Caco-2 (cell line): ENCODE measurements at regions of chr9 and their contacts with region 1.

Region 1: DNA sequence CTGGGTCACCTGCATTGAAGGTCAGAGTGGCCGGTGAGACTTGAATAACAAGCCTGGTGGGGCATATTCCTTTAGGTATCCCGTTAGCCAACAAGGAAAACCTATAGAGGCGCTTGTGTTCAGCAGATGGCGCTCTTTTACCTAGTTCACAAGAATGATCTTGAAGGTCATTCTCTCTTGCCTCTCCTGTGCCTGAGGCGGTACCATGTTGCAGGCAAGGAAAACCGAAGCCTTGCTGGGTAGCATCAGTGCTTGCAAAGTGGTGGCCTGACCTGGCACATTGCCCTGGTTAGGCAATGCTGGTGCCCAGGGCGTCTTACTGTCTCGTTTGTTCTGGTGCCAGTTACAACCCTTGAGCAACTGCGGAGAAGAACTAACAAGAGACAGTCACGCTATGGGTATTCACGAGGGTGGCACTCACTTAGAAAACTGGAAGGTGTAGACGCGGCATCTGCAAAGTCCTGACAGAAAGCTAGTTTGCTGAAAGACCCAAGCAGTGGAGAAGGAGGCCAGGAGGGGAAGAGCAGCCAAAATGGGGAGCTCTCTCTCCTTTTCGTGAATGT is 56.7 kb downstream of the AOPEP start:
- DNase-seq: peak; percentile 79 to 82
- H3K4me3 ChIP-seq: no peak overlapping the region
- H3K4me3 Mint-ChIP-seq: no peak overlapping the region
- H3K27ac Mint-ChIP-seq: no peak overlapping the region
- H3K4me1 ChIP-seq: peaks cover 8% of the 10 kb centered on the region; the same call in 1 of the 2 replicates
- H3K4me1 Mint-ChIP-seq: peaks cover 12% of the 10 kb centered on the region
- H3K27me3 ChIP-seq: no peaks in the 10 kb centered on the region; the same call in 1 of the 2 replicates
- H3K27me3 Mint-ChIP-seq: no peaks in the 10 kb centered on the region
- CTCF ChIP-seq: peak; percentile 71 to 76

Region 2: GRCh38 chr9:94672811-94673487 is 110.2 kb before region 1 on chr9:
- CTCF ChIA-PET with region 1: no interaction called
- POLR2A ChIA-PET with region 1: no interaction called
- intact Hi-C with region 1: loop called (anchors 5 kb)
- DNase-seq: no peak
- H3K4me3 ChIP-seq: no peak overlapping the region
- H3K4me3 Mint-ChIP-seq: no peak overlapping the region
- H3K27ac Mint-ChIP-seq: peak overlapping the region; percentile 27
- H3K4me1 ChIP-seq: peaks cover 32% of the 10 kb centered on the region
- H3K4me1 Mint-ChIP-seq: peaks cover 21% of the 10 kb centered on the region
- H3K27me3 ChIP-seq: no peaks in the 10 kb centered on the region
- H3K27me3 Mint-ChIP-seq: no peaks in the 10 kb centered on the region
- CTCF ChIP-seq: no peak

Region 3: DNA sequence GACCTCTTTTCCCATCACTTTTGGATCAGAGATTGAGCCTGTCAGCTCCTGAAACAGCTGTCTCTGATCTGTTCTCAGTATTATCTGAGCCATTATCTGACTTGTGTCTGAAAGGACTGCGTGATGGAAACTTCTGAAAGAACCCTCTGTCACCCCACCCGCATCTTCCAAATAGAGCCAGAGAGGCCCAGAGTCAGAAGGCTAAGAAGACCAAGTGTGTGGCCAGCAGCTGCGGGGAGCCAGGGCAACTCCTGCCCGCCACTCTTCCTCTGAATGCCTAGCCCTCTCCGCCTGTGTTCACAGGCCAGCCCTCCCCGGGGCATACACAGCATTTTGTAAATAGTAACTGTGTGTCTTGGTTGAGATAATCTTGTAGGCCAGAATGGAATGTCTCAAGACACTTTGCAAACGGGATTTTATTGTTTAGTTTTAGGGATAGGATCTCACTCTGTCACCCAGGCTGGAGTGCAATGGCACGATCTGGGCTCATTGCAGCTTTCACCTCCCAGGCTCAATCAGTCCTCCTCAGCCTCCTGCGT is 36.0 kb after region 1 on chr9:
- CTCF ChIA-PET with region 1: no interaction called
- POLR2A ChIA-PET with region 1: no interaction called
- intact Hi-C with region 1: loop called (anchors 2 kb)
- DNase-seq: peak; percentile 66 to 69
- H3K4me3 ChIP-seq: no peak overlapping the region
- H3K4me3 Mint-ChIP-seq: peak overlapping the region; percentile 49
- H3K27ac Mint-ChIP-seq: peak overlapping the region; percentile 95
- H3K4me1 ChIP-seq: peaks cover 44% of the 10 kb centered on the region
- H3K4me1 Mint-ChIP-seq: peaks cover 29% of the 10 kb centered on the region
- H3K27me3 ChIP-seq: no peaks in the 10 kb centered on the region
- H3K27me3 Mint-ChIP-seq: no peaks in the 10 kb centered on the region
- CTCF ChIP-seq: no peak

Region 4: GRCh38 chr9:94857791-94858190 is 74.6 kb after region 1 on chr9:
- CTCF ChIA-PET with region 1: no interaction called
- POLR2A ChIA-PET with region 1: interaction called, 7 read pairs
- intact Hi-C with region 1: loop called (anchors 1 kb)
- DNase-seq: no peak
- H3K4me3 ChIP-seq: no peak overlapping the region
- H3K4me3 Mint-ChIP-seq: no peak overlapping the region
- H3K27ac Mint-ChIP-seq: no peak overlapping the region
- H3K4me1 ChIP-seq: peaks cover 26% of the 10 kb centered on the region
- H3K4me1 Mint-ChIP-seq: peaks cover 14% of the 10 kb centered on the region
- H3K27me3 ChIP-seq: no peaks in the 10 kb centered on the region
- H3K27me3 Mint-ChIP-seq: no peaks in the 10 kb centered on the region
- CTCF ChIP-seq: peak in 1 of 2 experiments; percentile 1

Region 5: DNA sequence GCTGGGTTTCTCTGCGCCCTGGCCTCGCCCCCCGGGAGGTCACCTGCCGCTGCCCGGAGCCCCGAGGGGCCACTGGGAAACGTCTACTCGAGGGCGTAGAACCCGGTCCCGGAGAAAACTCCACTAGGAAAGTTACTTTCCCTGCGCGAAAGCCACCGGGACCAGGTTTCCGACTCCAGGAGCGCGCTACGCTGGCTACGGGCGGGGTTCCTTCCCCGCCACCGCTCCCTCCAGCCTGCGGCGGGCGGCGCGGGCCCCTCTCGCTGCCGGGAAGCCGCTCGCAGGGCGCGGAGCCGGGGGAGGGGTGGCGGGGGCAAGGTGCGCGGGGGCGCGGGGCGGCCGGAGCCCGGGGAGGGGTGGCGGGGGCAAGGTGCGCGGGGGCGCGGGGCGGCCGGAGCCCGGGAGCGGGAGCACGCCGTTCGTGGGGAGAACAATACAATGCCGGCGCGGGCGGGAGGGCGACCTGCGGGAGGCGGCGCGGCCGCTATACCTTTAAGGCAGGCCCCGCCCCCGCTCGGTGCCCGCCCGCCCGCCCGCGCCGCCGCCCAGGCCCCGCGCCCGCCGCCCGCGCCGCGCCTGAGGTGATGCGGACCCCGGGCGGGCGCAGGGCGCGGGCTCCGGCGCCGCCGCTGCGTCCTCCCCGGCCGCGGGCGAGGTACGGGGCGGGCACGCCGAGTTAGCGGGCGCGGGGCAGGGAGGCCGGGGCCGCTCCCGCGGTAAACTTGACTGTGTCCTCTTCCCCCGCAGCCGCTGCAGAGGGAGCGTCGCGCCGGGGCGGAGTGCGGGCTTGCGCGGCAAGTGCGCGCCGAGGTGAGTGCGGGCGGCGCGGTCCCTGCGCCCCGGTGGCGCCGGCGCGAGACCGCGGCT is 221.5 kb after region 1 on chr9:
- CTCF ChIA-PET with region 1: no interaction called
- POLR2A ChIA-PET with region 1: no interaction called
- intact Hi-C with region 1: loop called (anchors 1 kb)
- DNase-seq: peak; percentile 73 to 78
- H3K4me3 ChIP-seq: peak overlapping the region; percentile 86
- H3K4me3 Mint-ChIP-seq: peak overlapping the region; percentile 81
- H3K27ac Mint-ChIP-seq: no peak overlapping the region
- H3K4me1 ChIP-seq: peaks cover 40% of the 10 kb centered on the region
- H3K4me1 Mint-ChIP-seq: peaks cover 38% of the 10 kb centered on the region
- H3K27me3 ChIP-seq: no peaks in the 10 kb centered on the region
- H3K27me3 Mint-ChIP-seq: no peaks in the 10 kb centered on the region
- CTCF ChIP-seq: no peak

Region 6: DNA sequence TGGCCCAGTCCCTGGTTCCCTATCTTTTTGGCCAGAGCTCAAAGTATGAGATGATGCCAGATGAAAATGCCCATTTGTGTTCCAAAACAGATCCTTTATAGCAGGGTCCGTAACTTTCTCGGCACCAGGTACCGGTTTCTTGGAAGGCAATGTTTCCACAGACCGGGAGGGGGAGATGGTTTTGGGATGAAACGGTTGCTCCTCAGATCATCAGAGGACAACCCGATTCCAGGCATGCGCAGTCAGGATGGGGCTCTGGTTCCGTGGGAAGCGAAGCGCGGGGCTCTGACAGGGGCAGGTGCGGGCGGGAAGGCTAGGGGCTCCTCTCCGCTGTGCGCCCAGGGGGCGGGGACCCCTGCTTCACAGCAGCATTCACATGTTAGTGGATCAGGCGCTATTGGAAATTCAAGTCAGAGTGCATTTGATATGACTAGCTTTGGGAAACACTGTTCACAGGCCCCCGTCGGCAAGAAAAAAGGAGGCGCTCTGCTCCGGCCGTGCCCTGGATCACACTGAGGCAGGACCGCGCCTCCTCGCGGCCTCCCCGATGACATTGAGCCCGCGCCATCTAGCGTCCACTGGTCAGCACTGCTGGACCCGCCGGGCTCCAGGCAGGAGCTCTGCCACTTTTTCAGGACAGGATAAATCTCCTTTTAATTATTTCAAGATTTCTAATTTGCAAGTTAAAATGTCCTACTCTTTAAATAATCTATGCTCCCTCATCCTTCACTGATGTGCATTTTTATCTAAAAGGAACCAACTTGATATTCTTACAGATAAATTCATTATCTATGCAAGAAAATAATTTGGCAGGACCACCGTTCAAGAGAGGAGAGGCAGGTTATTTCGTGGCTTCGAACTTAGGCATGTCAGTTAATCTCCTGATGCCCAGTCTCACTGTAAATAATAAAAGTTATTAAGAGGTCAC is 344.3 kb after region 1 on chr9:
- CTCF ChIA-PET with region 1: no interaction called
- POLR2A ChIA-PET with region 1: no interaction called
- intact Hi-C with region 1: loop called (anchors 1 kb)
- DNase-seq: peak; percentile 67 to 77
- H3K4me3 ChIP-seq: no peak overlapping the region
- H3K4me3 Mint-ChIP-seq: no peak overlapping the region
- H3K27ac Mint-ChIP-seq: no peak overlapping the region
- H3K4me1 ChIP-seq: no peaks in the 10 kb centered on the region
- H3K4me1 Mint-ChIP-seq: peaks cover 13% of the 10 kb centered on the region
- H3K27me3 ChIP-seq: no peaks in the 10 kb centered on the region
- H3K27me3 Mint-ChIP-seq: no peaks in the 10 kb centered on the region
- CTCF ChIP-seq: peak; percentile 71 to 95